Dendritic cell treated with granulocyte-macrophage colony-stimulating factor and Interleukin-4, amounts not matched to agents 40 ng/mL and 50 ng/mL, for 4 days (primary cell): ENCODE measurements at regions of chr4 and their contacts with region 1.

Region 1: DNA sequence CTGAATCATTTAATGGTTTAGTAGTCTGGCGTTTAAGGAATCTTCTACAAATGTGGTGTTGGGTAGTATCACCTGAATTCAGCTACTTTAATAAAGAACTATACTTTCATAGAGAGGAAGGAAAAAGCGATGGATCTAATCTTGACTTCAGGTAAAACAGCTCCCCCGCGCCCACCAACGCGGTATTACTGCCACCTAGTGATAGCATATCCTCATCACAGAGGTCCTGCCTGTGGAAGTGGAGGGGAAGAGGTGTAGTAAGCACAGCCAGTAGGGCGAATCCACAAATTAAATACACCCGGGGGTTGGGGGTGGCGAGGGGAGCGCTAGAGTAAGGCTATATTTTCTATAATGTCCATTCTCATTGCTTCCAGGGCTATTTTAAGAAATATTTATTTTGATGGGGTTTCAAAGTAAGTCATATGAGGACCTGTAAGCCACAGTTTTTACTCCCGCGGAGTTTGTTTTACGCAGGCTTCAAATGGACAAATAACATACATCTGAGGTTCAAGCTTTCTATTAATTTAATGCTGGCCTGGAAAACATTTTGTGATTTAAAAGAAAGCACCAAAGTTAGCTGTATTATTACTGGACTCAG is 8.3 kb upstream of the DAPP1 start:
- H3K4me3 Mint-ChIP-seq: no peak overlapping the region
- H3K27ac Mint-ChIP-seq: no peak overlapping the region
- H3K4me1 Mint-ChIP-seq: peaks cover 10% of the 10 kb centered on the region
- H3K27me3 Mint-ChIP-seq: no peaks in the 10 kb centered on the region

Region 2: DNA sequence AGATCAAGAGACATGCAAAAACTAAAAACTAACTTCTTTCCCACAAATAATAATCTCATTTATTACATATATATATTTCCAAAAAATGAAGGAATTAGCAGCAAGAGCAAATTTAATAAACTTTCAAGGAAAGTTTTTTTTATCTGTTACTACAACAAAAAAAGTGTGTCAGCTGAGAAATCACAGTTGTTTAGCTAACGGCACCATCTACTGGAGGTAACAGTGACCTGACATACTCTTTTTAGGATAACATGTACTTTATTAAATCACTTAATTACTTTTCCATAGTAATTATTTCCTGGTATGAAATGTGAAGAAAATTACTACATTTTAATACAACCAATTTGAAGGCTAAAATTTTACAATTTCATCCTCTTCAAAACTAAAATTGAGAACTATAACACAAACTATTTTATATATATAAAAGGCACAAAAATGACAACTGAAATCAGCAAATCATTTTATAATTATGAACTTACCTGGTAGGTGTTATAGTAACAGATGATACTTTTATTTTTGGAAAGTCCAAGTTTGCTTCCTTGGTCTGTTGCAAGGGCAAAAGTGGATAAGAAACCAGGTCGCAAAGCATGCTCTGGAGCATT is 76.8 kb after region 1 on chr4:
- intact Hi-C with region 1: loop called (anchors 1 kb)
- H3K4me3 Mint-ChIP-seq: no peak overlapping the region
- H3K27ac Mint-ChIP-seq: no peak overlapping the region
- H3K4me1 Mint-ChIP-seq: peaks cover 5% of the 10 kb centered on the region
- H3K27me3 Mint-ChIP-seq: no peaks in the 10 kb centered on the region